ENCODE measurements at regions of chr18 and their contacts with region 1.

Region 1: GRCh38 chr18:55234366-55235093 is 275.3 kb upstream of the CCDC68 start:
- DNase-seq: peak; percentile 85
- H3K4me3 ChIP-seq: no peak overlapping the region
- H3K27ac ChIP-seq: peak overlapping the region; percentile 19 to 51 (median 39)
- H3K4me1 ChIP-seq: peaks cover 0 to 17% (median 8%) of the 10 kb centered on the region in 4 donors
- H3K27me3 ChIP-seq: no peaks in the 10 kb centered on the region
- CTCF ChIP-seq: peak; percentile 57 to 77 (median 76)
- EP300 ChIP-seq: no peak
- POLR2A ChIP-seq: no peak

Region 2: GRCh38 chr18:55337908-55338521 is 103.5 kb after region 1 on chr18:
- intact Hi-C with region 1: loop called (anchors 5 kb)
- DNase-seq: peak; percentile 69
- H3K4me3 ChIP-seq: peak overlapping the region in 1 of 4 donors; percentile 3
- H3K27ac ChIP-seq: peak overlapping the region; percentile 71 to 75 (median 72)
- H3K4me1 ChIP-seq: peaks cover 0 to 30% (median 15%) of the 10 kb centered on the region in 4 donors
- H3K27me3 ChIP-seq: no peaks in the 10 kb centered on the region
- CTCF ChIP-seq: no peak
- EP300 ChIP-seq: no peak
- POLR2A ChIP-seq: no peak

Region 3: GRCh38 chr18:55781481-55781957 is 547.0 kb after region 1 on chr18:
- intact Hi-C with region 1: loop called (anchors 2 kb)
- DNase-seq: no peak
- H3K4me3 ChIP-seq: no peak overlapping the region
- H3K27ac ChIP-seq: no peak overlapping the region
- H3K4me1 ChIP-seq: peaks cover 0 to 10% (median 0%) of the 10 kb centered on the region in 4 donors
- H3K27me3 ChIP-seq: no peaks in the 10 kb centered on the region
- CTCF ChIP-seq: peak in 3 of 4 experiments; percentile 28 to 57 (median 39)
- EP300 ChIP-seq: no peak
- POLR2A ChIP-seq: no peak

Region 4: DNA sequence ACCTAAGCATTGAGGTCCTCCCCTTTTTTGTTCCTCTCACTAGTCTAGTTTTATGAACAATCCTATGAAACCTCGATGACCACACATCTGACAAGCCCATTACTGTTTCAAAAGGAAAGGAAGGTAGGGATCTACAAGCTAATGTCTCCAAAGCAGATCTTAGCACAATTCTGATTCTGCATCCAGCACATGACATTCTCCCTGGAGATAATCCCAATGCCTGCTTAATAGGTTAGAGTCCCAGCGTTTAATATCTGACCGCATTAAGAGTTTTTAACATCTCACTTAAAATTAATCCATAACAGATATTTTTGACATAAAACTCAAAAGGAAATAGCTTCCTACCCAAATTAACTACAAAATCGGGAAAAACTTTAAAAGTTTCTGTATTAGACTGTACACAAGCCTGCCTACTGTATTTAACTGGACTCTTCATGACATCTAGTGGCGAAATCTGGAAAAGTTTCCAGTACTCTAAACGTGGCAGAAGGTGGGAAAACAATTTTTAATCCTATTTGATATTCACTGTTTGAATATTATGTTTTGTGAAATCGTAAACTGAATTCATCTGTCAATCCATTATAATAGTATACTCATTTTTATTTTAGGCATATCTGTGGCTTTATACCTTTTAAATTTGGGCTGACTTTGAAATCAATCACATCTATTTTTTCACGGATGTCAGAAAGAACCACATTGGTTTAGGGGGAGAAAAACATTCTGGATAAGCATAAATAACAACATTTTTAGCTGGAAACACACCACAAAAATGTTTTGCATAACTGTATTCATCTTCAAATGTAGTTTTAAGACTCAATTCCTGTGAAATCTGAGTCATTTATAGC is 1341.5 kb after region 1 on chr18:
- intact Hi-C with region 1: loop called (anchors 2 kb)
- DNase-seq: no peak
- H3K4me3 ChIP-seq: no peak overlapping the region
- H3K27ac ChIP-seq: no peak overlapping the region
- H3K4me1 ChIP-seq: peaks cover 0 to 16% (median 9%) of the 10 kb centered on the region in 4 donors
- H3K27me3 ChIP-seq: no peaks in the 10 kb centered on the region
- CTCF ChIP-seq: peak; percentile 28 to 66 (median 62)
- EP300 ChIP-seq: no peak
- POLR2A ChIP-seq: no peak

Region 5: DNA sequence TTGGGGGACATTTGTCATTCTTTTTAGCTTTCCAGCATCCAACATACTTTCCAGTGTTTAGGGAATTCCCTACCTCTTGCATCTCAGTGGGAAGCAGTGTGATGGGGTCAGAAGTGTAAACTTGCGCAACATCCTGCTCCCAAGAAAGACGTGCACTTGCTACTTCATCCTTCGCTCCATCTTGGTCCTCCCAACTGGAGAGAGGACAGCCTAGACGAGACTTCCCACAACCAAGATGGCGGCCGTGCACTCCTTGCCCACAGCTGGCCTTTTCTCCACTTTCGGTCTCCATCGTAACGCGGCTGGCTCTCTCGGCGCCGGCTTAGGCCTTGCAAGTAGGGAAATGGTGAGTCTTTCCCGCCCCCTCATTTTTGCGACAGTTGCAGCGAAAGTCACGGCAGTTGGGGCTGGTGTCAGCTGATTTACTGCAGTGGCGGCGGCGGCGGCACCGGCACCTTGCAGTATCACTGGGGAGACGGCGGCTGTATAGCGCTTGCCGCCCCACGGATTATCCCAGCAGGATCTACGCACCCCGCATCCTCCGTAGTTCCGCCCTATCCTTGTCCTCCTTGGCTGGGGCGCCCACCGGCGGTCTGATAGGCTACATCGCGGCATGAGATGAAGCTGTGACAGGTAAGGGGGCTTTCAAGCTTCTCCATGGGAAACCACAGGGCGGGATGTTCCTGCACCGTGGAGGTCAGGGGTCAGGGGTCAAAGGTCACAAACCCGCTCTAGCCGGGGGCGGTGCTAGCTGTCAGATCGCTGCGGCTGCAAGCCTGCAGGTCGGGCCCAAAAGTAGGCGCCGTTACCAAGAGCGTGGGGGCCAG is 1416.6 kb after region 1 on chr18 and contains the start of gene WDR7:
- intact Hi-C with region 1: loop called (anchors 5 kb)
- DNase-seq: peak; percentile 99
- H3K4me3 ChIP-seq: peak within 1 kb of the TSS; percentile 84 to 92 (median 88)
- H3K27ac ChIP-seq: peak within 1 kb of the TSS; percentile 87 to 91 (median 90)
- H3K4me1 ChIP-seq: peaks cover 0 to 21% (median 12%) of the 10 kb centered on the region in 4 donors
- H3K27me3 ChIP-seq: no peaks in the 10 kb centered on the region
- CTCF ChIP-seq: peak in 1 of 4 experiments; percentile 8
- EP300 ChIP-seq: no peak
- POLR2A ChIP-seq: peak in 1 of 2 donors; percentile 18
- total RNA-seq, gene WDR7: 28.5 to 45.3 (median 39.1) TPM

Measured in sigmoid colon (tissue), 7 donors.